ENCODE measurements at regions of chr1 and their contacts with region 1.

Region 1: GRCh38 chr1:117401761-117402160 is 34.5 kb downstream of the MAN1A2 start:
- DNase-seq: no peak
- ATAC-seq: no peak
- H3K4me3 ChIP-seq: no peak overlapping the region
- H3K4me3 Mint-ChIP-seq: peak overlapping the region in 4 of 10 donors; percentile 1 to 37 (median 16)
- H3K27ac ChIP-seq: no peak overlapping the region
- H3K27ac Mint-ChIP-seq: no peak overlapping the region
- H3K4me1 ChIP-seq: no peaks in the 10 kb centered on the region
- H3K4me1 Mint-ChIP-seq: peaks cover 5 to 64% (median 52%) of the 10 kb centered on the region in 7 donors
- H3K27me3 ChIP-seq: no peaks in the 10 kb centered on the region
- H3K27me3 Mint-ChIP-seq: no peaks in the 10 kb centered on the region

Region 2: DNA sequence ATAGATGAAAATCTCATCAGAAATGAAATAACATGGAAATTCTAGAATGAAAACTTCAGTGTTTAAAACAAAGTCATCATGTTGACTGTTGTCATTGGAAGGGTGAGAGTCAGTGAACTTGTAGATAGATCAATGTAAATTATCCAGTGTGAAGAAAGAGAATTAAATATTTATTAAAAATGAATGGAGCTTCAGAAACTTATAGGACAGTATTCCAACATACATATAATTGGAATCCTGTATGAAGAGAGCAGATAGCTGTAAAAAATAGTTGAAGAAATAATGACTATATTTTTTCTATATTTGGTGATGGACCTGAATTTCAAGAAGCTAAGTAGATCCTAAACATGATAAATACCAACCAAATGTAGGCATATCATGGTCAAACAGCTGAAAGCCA is 25.5 kb after region 1 on chr1:
- CTCF ChIA-PET with region 1: no interaction called
- POLR2A ChIA-PET with region 1: no interaction called
- intact Hi-C with region 1: loop called in 1 of 2 experiments (anchors 2 kb)
- DNase-seq: no peak
- ATAC-seq: no peak
- H3K4me3 ChIP-seq: no peak overlapping the region
- H3K4me3 Mint-ChIP-seq: no peak overlapping the region
- H3K27ac ChIP-seq: no peak overlapping the region
- H3K27ac Mint-ChIP-seq: no peak overlapping the region
- H3K4me1 ChIP-seq: no peaks in the 10 kb centered on the region
- H3K4me1 Mint-ChIP-seq: peaks cover 0 to 6% (median 2%) of the 10 kb centered on the region in 7 donors
- H3K27me3 ChIP-seq: no peaks in the 10 kb centered on the region
- H3K27me3 Mint-ChIP-seq: no peaks in the 10 kb centered on the region

Region 3: DNA sequence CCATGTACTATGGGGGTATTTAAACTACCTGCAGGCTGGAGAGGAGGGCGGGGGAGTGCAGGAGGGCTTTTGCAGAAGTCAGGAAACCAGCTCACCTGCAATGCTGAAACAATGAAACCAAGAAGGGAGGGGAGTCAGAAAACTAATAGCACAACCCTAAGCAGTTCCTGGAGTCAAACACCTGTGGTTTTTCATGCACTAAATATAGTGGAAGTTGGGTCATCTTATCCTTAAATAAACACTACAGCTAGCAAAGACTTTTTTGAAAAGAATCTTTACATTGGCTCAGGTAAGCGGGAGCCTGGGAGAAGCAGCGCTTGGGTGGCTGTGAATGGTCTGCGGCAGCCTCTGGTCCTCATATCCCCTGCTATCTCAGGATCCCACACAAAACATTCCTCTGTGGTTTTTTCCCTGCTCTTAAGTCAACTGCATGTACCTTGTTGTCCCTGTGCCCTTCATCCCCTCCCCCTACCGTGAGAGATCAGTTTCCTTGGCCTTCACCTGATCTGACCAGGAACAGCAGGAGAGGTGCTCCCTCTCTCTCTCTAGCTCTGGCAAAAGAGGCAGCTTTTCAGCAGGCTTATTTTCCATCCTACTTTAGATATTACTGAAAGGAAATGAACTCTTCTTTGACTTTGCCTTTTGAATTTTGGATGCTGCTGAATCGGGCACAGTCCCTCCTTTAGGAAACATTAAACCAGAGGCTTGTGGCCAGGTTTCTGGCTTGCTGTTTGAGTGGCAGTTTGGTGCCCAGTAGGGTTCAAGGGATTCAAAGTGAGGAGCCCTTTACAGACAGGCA is 230.7 kb after region 1 on chr1:
- CTCF ChIA-PET with region 1: no interaction called
- POLR2A ChIA-PET with region 1: no interaction called
- intact Hi-C with region 1: no loop called
- DNase-seq: no peak
- ATAC-seq: no peak
- H3K4me3 ChIP-seq: no peak overlapping the region
- H3K4me3 Mint-ChIP-seq: peak overlapping the region in 1 of 10 donors; percentile 21
- H3K27ac ChIP-seq: no peak overlapping the region
- H3K27ac Mint-ChIP-seq: peak overlapping the region in 1 of 9 donors; percentile 37
- H3K4me1 ChIP-seq: peaks cover 0 to 4% of the 10 kb centered on the region in 2 donors
- H3K4me1 Mint-ChIP-seq: peaks cover 10 to 47% (median 13%) of the 10 kb centered on the region in 7 donors
- H3K27me3 ChIP-seq: no peaks in the 10 kb centered on the region
- H3K27me3 Mint-ChIP-seq: peaks cover 4 to 43% (median 10%) of the 10 kb centered on the region in 5 donors

Measured in naive thymus-derived CD4-positive, alpha-beta T cell (primary cell).